ENCODE measurements at regions of chr14 and their contacts with region 1.

Region 1: DNA sequence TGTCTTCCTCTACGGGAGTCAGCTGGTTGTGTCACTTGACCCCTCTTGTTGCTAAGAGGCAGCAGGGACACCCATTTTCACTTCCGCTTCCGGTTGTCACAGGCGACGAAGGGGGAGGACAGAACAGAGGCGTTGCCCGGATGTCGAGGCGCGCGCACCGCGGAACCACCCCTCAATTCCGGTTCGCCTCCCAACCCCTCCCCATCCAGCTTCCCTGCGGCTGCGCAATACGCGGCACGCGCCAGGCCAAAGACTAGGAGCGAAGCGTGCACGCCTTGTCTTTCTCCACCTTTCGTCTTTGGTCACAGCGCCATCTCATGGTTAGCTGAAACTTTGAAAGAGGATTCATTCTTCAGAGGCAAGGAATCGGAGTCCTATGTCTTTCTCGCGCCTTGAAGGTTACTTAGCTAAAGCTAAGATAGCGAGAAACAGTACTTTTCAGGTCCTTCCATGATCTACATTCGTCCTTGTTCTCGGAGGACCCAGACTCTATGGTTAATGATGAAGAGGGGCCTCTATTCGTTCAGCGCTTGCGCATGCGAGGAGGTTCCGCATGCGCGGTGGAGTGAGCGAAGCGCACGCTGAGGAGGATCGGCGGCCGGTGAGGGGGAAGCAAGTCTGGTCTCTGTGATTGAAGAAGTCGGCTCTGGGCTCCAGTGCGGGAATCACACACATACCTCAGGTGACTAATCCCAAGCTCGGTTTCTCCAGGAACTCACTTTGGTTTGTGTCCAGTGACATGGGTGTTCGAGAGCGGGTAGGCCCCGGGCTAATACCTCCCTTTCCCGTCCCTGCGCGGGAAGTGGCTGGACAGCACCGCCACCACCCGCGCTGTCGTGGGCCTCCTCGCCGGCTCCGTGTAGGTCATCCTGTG is at the starts of genes ATP6V1D and EIF2S1:
- DNase-seq: peak; percentile 100
- ATAC-seq: peak; percentile 90
- H3K4me3 ChIP-seq: peak within 1 kb of the TSS; percentile 79 to 97 (median 93)
- H3K4me3 Mint-ChIP-seq: peak within 1 kb of the TSS; percentile 100
- H3K27ac ChIP-seq: peak within 1 kb of the TSS; percentile 92 to 95
- H3K27ac Mint-ChIP-seq: peak within 1 kb of the TSS; percentile 100
- H3K4me1 ChIP-seq: peaks cover 26% of the 10 kb centered on the region in 2 donors
- H3K4me1 Mint-ChIP-seq: peaks cover 50% of the 10 kb centered on the region
- H3K27me3 ChIP-seq: no peaks in the 10 kb centered on the region
- H3K27me3 Mint-ChIP-seq: no peaks in the 10 kb centered on the region
- CTCF ChIP-seq: peak; percentile 100
- total RNA-seq, gene ATP6V1D: 35.3 and 35.6 TPM in 2 replicates
- total RNA-seq, gene EIF2S1: 39.3 and 39.9 TPM in 2 replicates

Region 2: GRCh38 chr14:66507722-66508546 is 852.1 kb before region 1 on chr14 and contains the start of gene GPHN:
- CTCF ChIA-PET with region 1: no interaction called
- POLR2A ChIA-PET with region 1: no interaction called
- intact Hi-C with region 1: loop called (anchors 2 kb)
- DNase-seq: peak; percentile 90
- ATAC-seq: peak; percentile 90
- H3K4me3 ChIP-seq: peak within 1 kb of the TSS; percentile 74 to 90 (median 81)
- H3K4me3 Mint-ChIP-seq: peak within 1 kb of the TSS; percentile 99
- H3K27ac ChIP-seq: peak within 1 kb of the TSS; percentile 36 to 66
- H3K27ac Mint-ChIP-seq: peak within 1 kb of the TSS; percentile 91
- H3K4me1 ChIP-seq: peaks cover 7 to 18% of the 10 kb centered on the region in 2 donors
- H3K4me1 Mint-ChIP-seq: peaks cover 25% of the 10 kb centered on the region
- H3K27me3 ChIP-seq: peaks cover 0 to 8% (median 0%) of the 10 kb centered on the region in 4 experiments
- H3K27me3 Mint-ChIP-seq: peaks cover 6% of the 10 kb centered on the region
- CTCF ChIP-seq: peak; percentile 24
- total RNA-seq, gene GPHN: 15.5 and 18.0 TPM in 2 replicates

Region 3: GRCh38 chr14:67240978-67241414 is 119.0 kb before region 1 on chr14:
- CTCF ChIA-PET with region 1: interaction called, 4 read pairs
- POLR2A ChIA-PET with region 1: no interaction called
- intact Hi-C with region 1: loop called (anchors 1 kb)
- DNase-seq: peak; percentile 95
- ATAC-seq: peak; percentile 93
- H3K4me3 ChIP-seq: peak overlapping the region; percentile 56 to 94 (median 77)
- H3K4me3 Mint-ChIP-seq: peak overlapping the region; percentile 80
- H3K27ac ChIP-seq: peak overlapping the region; percentile 65 to 77
- H3K27ac Mint-ChIP-seq: peak overlapping the region; percentile 89
- H3K4me1 ChIP-seq: peaks cover 9 to 10% of the 10 kb centered on the region in 2 donors
- H3K4me1 Mint-ChIP-seq: peaks cover 15% of the 10 kb centered on the region
- H3K27me3 ChIP-seq: no peaks in the 10 kb centered on the region
- H3K27me3 Mint-ChIP-seq: no peaks in the 10 kb centered on the region
- CTCF ChIP-seq: no peak

Region 4: DNA sequence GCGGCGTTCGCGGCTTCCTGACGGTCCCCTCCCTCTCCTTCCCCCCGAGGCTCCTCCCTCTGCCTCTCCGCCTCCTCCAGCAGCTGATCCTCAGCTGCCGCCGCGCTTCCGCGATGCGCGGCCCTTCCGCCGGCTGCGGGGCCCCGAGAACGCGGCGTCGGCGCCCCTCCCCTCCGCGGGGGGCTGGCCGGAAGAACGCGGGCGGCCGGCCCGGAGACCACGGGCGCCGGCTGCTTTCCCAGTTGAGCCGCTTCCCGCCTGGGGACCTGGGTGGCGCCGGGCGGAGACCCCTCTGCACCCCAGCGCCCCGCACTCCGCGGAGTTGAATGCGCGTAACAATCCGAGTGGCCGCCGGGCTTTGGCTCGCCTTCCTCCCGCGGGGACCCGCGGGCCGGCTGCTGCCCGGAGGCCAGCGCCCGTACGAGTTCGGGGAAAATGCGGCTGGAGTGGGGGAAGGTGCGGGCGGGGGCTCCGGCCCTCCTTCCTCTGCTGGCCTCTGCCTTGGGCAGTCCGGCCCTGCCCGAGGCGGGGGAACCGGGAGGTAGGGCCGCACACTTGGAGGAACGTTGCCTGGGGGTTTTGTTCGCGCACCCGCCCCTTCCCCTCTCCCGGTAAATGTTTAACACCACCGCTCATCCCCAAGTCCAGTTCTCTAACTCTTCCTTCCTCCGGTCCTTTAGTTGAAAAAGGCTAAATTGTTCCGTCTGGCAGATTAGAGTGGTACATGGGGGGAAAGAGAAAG is 1793.3 kb after region 1 on chr14:
- CTCF ChIA-PET with region 1: no interaction called
- POLR2A ChIA-PET with region 1: no interaction called
- intact Hi-C with region 1: loop called (anchors 5 kb)
- DNase-seq: peak; percentile 95
- ATAC-seq: peak; percentile 92
- H3K4me3 ChIP-seq: peak overlapping the region; percentile 21 to 94 (median 92)
- H3K4me3 Mint-ChIP-seq: peak overlapping the region; percentile 89
- H3K27ac ChIP-seq: peak overlapping the region; percentile 56 to 72
- H3K27ac Mint-ChIP-seq: peak overlapping the region; percentile 95
- H3K4me1 ChIP-seq: peaks cover 9 to 21% of the 10 kb centered on the region in 2 donors
- H3K4me1 Mint-ChIP-seq: peaks cover 32% of the 10 kb centered on the region
- H3K27me3 ChIP-seq: no peaks in the 10 kb centered on the region
- H3K27me3 Mint-ChIP-seq: peaks cover 3% of the 10 kb centered on the region
- CTCF ChIP-seq: no peak

Measured in B cell (primary cell).